Activated B cell treated with CpG ODN at 0.5 μM for 24 hours (primary cell): ENCODE measurements at regions of chr3 and their contacts with region 1.

Region 1: DNA sequence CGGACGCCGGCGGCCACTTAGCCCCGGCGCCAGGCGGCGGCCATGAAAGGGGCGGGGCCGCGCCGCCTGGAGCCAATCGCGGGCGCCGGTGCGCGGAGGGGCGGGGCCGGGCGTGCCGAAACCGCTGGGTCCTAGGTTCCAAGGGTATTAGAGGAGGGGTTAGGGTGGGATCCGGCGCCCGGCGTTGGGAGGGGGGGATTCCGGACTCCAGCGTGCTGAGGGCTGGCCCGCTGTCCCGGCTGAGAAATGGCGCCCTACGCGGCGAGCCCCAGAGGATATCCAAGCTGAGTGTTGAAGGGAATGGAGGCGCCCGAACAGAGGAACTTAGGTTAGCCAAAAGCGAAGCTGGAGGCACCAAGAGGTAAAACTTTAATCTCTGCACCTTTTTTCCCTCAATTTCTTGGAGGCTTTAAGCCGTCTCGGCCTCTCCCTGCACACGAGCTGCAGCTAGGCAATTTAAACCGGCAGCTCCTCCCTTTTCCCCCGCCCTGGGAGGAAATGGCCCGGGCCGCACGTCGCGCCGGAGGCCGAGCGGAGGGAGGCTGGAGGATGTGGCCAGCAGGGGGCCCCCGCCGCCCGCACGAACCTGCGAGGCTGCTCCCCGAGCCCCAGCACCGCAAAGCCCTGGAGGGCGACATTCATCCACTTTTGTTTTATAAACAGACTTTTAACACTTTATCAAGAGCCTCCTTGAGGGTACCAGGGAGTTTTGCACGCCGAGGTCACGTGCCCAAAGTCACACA is at the start of gene XXYLT1:
- DNase-seq: peak; percentile 84
- ATAC-seq: peak; percentile 87
- H3K4me3 Mint-ChIP-seq: peak within 1 kb of the TSS; percentile 87
- H3K27ac Mint-ChIP-seq: peak within 1 kb of the TSS; percentile 82
- H3K4me1 Mint-ChIP-seq: peaks cover 20% of the 10 kb centered on the region
- H3K27me3 Mint-ChIP-seq: no peaks in the 10 kb centered on the region
- CTCF ChIP-seq: peak; percentile 77
- total RNA-seq, gene XXYLT1: 7.6 and 7.9 TPM in 2 replicates

Region 2: DNA sequence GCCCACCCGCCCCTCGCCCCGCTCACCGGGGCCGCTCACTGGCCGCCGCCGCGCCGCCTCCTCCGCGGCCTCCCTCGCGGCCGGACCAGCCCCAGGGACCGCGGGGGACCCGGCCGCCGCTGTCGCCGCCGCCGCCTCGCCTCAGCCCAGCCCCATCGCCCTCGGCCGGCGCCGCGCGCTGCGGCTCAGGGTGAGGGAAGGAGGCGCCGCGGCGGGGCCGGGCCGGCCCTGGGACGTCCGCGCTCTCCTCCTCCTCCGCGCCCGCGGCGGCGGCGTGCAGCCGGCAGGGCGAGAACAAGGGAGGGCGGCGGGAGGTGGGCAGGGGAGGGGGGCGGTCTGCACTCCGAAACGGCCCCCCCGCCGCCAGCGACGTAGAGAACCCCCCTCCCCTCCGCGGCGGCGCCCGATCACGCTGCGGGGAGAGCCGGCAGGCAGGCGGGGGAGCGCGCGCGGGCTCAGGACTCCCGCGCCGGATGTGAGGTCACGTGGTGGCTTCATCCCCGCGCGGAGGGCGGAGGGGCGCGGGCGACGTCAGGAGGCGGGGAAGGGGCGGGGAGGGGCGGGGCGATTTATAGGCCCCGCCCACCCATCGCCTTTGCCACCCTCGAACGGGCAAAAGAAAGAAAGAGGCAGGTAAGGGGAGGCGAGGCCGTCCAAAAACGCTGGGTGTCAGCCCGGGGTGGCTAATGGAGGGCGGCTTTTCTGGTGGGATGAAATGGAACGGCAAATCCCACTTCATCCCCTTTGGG is 784.6 kb before region 1 on chr3 and contains the start of gene ATP13A3:
- CTCF ChIA-PET with region 1: no interaction called
- POLR2A ChIA-PET with region 1: no interaction called
- intact Hi-C with region 1: loop called (anchors 5 kb)
- DNase-seq: peak; percentile 86
- ATAC-seq: peak; percentile 75
- H3K4me3 Mint-ChIP-seq: peak within 1 kb of the TSS; percentile 91
- H3K27ac Mint-ChIP-seq: peak within 1 kb of the TSS; percentile 88
- H3K4me1 Mint-ChIP-seq: peaks cover 63% of the 10 kb centered on the region
- H3K27me3 Mint-ChIP-seq: no peaks in the 10 kb centered on the region
- CTCF ChIP-seq: no peak
- total RNA-seq, gene ATP13A3: 79.8 and 91.9 TPM in 2 replicates

Region 3: GRCh38 chr3:195259475-195260279 is 11.6 kb before region 1 on chr3:
- CTCF ChIA-PET with region 1: interaction called, 24 read pairs
- POLR2A ChIA-PET with region 1: interaction called, 7 read pairs
- intact Hi-C with region 1: no loop called
- DNase-seq: peak; percentile 95
- ATAC-seq: peak; percentile 91
- H3K4me3 Mint-ChIP-seq: peak overlapping the region; percentile 74
- H3K27ac Mint-ChIP-seq: peak overlapping the region; percentile 81
- H3K4me1 Mint-ChIP-seq: peaks cover 13% of the 10 kb centered on the region
- H3K27me3 Mint-ChIP-seq: no peaks in the 10 kb centered on the region
- CTCF ChIP-seq: no peak

Region 4: GRCh38 chr3:195542698-195543499 is 271.6 kb after region 1 on chr3 and contains the start of gene PPP1R2:
- CTCF ChIA-PET with region 1: interaction called, 12 read pairs
- POLR2A ChIA-PET with region 1: interaction called, 20 read pairs
- intact Hi-C with region 1: loop called (anchors 1 kb)
- DNase-seq: peak; percentile 95
- ATAC-seq: peak; percentile 84
- H3K4me3 Mint-ChIP-seq: peak within 1 kb of the TSS; percentile 91
- H3K27ac Mint-ChIP-seq: peak within 1 kb of the TSS; percentile 92
- H3K4me1 Mint-ChIP-seq: peaks cover 76% of the 10 kb centered on the region
- H3K27me3 Mint-ChIP-seq: no peaks in the 10 kb centered on the region
- CTCF ChIP-seq: no peak
- total RNA-seq, gene PPP1R2: 62.5 and 64.1 TPM in 2 replicates

Region 5: DNA sequence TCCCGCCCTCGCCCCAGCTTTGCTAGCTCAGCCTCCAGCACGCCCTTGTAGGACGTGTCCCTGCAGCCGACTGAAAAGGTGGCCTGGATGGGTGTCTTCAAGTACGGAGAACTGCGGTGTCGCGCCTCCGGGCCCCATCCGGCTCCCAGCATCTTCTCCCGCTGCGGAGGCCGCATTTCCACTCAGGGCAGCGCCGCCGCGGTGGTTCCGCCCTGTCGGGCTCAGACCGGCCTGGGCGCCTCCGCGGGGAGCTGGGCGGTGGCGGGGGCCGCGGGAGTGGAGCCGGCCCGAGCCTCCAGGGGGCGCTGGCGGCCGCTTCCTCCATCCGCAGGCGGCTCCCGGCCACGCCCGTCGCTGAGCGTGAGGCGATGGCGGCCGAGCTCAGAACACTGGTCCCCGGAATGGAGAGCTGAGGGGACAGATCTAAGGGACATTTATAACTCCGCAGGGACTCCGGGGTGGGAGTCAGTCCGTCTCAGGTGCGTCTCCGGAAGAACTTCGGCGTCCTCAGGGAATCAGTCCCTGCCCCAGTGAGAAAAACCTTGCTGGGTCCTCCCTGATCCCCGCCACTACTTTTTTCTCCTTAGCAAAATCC is 1257.4 kb after region 1 on chr3:
- CTCF ChIA-PET with region 1: no interaction called
- POLR2A ChIA-PET with region 1: interaction called, 11 read pairs
- intact Hi-C with region 1: no loop called
- DNase-seq: peak; percentile 92
- ATAC-seq: peak; percentile 97
- H3K4me3 Mint-ChIP-seq: peak overlapping the region; percentile 77
- H3K27ac Mint-ChIP-seq: peak overlapping the region; percentile 68
- H3K4me1 Mint-ChIP-seq: peaks cover 9% of the 10 kb centered on the region
- H3K27me3 Mint-ChIP-seq: no peaks in the 10 kb centered on the region
- CTCF ChIP-seq: no peak